Naive thymus-derived CD4-positive, alpha-beta T cell (primary cell): ENCODE measurements at regions of chrX and their contacts with region 1.

Region 1: DNA sequence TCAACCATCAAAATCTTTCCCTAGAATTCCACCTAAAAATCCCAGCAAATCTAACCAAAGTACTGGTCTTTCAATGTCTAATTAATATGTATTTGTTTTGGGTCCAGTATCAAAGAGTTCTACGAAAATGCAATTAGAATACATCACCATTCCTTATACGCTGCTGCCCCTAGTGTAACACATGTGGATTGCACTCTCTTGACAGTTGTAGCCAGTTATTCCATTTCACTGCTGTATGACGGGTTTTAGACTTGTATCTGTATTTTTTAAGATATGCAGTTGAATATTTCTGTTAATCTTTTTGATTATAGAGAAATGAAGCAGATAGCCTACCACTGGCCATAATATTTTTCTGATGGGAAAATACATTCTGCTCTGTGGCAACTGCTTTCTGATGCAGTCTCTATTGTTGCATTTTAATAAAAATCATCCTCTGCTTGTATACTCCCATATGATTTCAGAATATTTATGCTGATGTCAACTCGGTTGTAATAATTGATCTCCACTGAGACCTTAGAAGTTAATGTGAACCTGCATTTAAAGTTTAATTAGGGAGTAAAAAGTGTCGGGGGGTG is 17.1 kb upstream of the PAGE2B start:
- DNase-seq: peak in 6 of 9 donors; percentile 11 to 46 (median 32)
- ATAC-seq: peak; percentile 84
- H3K4me3 ChIP-seq: peak overlapping the region; percentile 35
- H3K4me3 Mint-ChIP-seq: peak overlapping the region; percentile 12 to 87 (median 76)
- H3K27ac ChIP-seq: no peak overlapping the region
- H3K27ac Mint-ChIP-seq: peak overlapping the region in 7 of 9 donors; percentile 43 to 95 (median 90)
- H3K4me1 ChIP-seq: peaks cover 8 to 16% of the 10 kb centered on the region in 2 donors
- H3K4me1 Mint-ChIP-seq: peaks cover 8 to 29% (median 21%) of the 10 kb centered on the region in 7 donors
- H3K27me3 ChIP-seq: no peaks in the 10 kb centered on the region
- H3K27me3 Mint-ChIP-seq: peaks cover 0 to 5% (median 0%) of the 10 kb centered on the region in 5 donors

Region 2: GRCh38 chrX:54423161-54423888 is 634.4 kb before region 1 on chrX:
- CTCF ChIA-PET with region 1: no interaction called
- POLR2A ChIA-PET with region 1: no interaction called
- intact Hi-C with region 1: loop called in 1 of 2 experiments (anchors 1 kb)
- DNase-seq: no peak
- ATAC-seq: no peak
- H3K4me3 ChIP-seq: no peak overlapping the region
- H3K4me3 Mint-ChIP-seq: no peak overlapping the region
- H3K27ac ChIP-seq: no peak overlapping the region
- H3K27ac Mint-ChIP-seq: no peak overlapping the region
- H3K4me1 ChIP-seq: no peaks in the 10 kb centered on the region
- H3K4me1 Mint-ChIP-seq: no peaks in the 10 kb centered on the region
- H3K27me3 ChIP-seq: no peaks in the 10 kb centered on the region
- H3K27me3 Mint-ChIP-seq: peaks cover 0 to 13% (median 2%) of the 10 kb centered on the region in 5 donors

Region 3: DNA sequence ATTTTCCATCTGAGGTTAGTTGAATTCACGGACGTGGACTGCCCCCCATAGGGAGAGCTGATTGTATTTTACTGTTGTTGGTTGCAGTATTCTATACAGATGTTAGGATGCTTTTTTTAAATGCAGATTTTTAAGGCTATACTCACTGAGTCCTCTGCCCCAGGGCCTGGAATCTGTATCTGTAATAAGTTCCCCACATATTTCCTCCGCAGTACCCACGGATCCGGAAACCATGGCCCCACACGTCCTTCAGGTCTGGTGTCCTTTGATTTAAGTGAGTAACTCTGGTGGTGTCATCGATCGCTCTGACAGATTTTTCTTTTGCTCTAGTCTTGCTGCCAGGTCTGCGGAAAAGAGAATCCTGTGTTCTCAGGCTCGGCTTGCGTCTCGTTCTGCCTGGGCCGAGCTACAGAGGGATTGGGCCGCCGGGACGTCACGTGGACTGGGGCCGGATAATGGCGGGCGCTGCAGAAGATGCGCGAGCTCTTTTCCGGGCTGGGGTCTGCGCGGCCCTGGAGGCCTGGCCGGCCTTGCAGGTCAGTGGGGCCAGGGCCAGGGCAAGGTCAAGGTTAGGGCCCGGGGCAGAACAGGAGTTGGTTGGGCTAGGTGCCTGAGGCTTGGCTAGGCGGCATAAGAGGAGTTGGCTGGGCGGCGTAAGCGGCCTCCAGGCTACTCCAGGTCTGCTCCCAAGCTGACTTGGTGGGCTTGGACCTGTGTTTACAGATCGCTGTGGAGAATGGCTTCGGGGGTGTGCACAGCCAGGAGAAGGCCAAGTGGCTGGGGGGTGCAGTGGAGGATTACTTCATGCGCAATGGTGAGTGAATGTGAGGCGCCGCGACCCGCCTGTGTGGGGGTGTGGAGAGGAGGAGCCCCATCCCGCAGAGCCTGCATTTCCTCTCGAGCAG is 617.5 kb before region 1 on chrX and contains the start of gene TSR2:
- CTCF ChIA-PET with region 1: no interaction called
- POLR2A ChIA-PET with region 1: no interaction called
- intact Hi-C with region 1: loop called in 1 of 2 experiments (anchors 5 kb)
- DNase-seq: peak; percentile 50 to 80 (median 74)
- ATAC-seq: peak; percentile 99
- H3K4me3 ChIP-seq: peak within 1 kb of the TSS; percentile 94
- H3K4me3 Mint-ChIP-seq: peak within 1 kb of the TSS; percentile 84 to 100 (median 92)
- H3K27ac ChIP-seq: peak within 1 kb of the TSS; percentile 81
- H3K27ac Mint-ChIP-seq: peak within 1 kb of the TSS; percentile 73 to 94 (median 86)
- H3K4me1 ChIP-seq: peaks cover 8 to 12% of the 10 kb centered on the region in 2 donors
- H3K4me1 Mint-ChIP-seq: peaks cover 15 to 39% (median 26%) of the 10 kb centered on the region in 7 donors
- H3K27me3 ChIP-seq: no peaks in the 10 kb centered on the region
- H3K27me3 Mint-ChIP-seq: no peaks in the 10 kb centered on the region
- total RNA-seq, gene TSR2: 33.6 to 43.3 (median 40.5) TPM

Region 4: DNA sequence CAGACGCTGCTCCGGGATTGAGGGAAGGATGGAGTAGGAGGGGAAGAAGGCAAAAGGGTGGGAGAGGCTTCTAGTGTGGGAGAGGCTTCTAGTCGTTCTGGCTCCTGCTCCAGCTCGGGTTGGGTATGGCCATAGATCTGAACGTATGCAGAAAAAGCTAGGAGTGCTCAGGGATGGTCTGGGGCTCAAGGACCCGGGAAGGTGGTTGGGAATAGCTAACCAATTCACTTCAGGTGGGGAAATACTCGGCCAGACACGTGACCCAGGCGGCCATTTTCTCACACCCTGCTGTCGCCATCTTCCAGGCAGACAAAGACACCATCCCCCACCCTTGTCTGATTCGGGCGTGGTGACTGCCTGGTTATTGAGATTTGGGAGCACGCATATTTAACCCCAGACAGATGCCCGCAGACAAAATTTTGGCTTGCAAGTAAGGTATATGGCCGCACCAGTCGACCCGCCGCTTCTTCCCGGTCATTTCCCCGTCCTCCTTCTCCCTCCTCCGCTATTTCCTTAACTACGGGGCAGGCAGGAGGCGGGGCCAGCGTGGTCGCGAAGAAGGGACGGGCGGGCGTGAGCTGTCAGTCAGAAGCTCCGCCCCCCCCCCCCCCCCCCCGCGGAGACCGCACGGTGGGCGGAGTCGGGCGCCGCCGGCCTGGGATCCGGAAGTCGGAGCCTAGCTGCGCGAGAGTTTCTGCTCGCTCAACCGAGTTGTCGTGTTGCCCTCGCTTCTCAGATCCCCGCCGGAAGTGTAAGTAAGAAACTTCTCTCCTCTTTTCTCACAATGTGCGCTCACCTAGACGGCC is 528.0 kb before region 1 on chrX and contains the start of gene GNL3L:
- CTCF ChIA-PET with region 1: no interaction called
- POLR2A ChIA-PET with region 1: no interaction called
- intact Hi-C with region 1: loop called in 1 of 2 experiments (anchors 5 kb)
- DNase-seq: peak; percentile 58 to 84 (median 76)
- ATAC-seq: peak; percentile 93
- H3K4me3 ChIP-seq: peak within 1 kb of the TSS; percentile 82
- H3K4me3 Mint-ChIP-seq: peak within 1 kb of the TSS; percentile 87 to 97 (median 94)
- H3K27ac ChIP-seq: peak within 1 kb of the TSS; percentile 82
- H3K27ac Mint-ChIP-seq: peak within 1 kb of the TSS; percentile 87 to 99 (median 93)
- H3K4me1 ChIP-seq: peaks cover 17 to 30% of the 10 kb centered on the region in 2 donors
- H3K4me1 Mint-ChIP-seq: peaks cover 10 to 46% (median 32%) of the 10 kb centered on the region in 7 donors
- H3K27me3 ChIP-seq: no peaks in the 10 kb centered on the region
- H3K27me3 Mint-ChIP-seq: no peaks in the 10 kb centered on the region
- total RNA-seq, gene GNL3L: 32.8 to 55.4 (median 41.8) TPM

Region 5: GRCh38 chrX:54808605-54809483 is 248.9 kb before region 1 on chrX:
- CTCF ChIA-PET with region 1: no interaction called
- POLR2A ChIA-PET with region 1: no interaction called
- intact Hi-C with region 1: loop called in 1 of 2 experiments (anchors 5 kb)
- DNase-seq: peak; percentile 63 to 90 (median 84)
- ATAC-seq: peak; percentile 84
- H3K4me3 ChIP-seq: peak overlapping the region; percentile 93
- H3K4me3 Mint-ChIP-seq: peak overlapping the region; percentile 90 to 99 (median 96)
- H3K27ac ChIP-seq: peak overlapping the region; percentile 89
- H3K27ac Mint-ChIP-seq: peak overlapping the region; percentile 93 to 98 (median 96)
- H3K4me1 ChIP-seq: no peaks in the 10 kb centered on the region
- H3K4me1 Mint-ChIP-seq: peaks cover 5 to 28% (median 19%) of the 10 kb centered on the region in 7 donors
- H3K27me3 ChIP-seq: no peaks in the 10 kb centered on the region
- H3K27me3 Mint-ChIP-seq: peaks cover 0 to 25% (median 0%) of the 10 kb centered on the region in 5 donors

Region 6: GRCh38 chrX:54825716-54826438 is 231.9 kb before region 1 on chrX:
- CTCF ChIA-PET with region 1: no interaction called
- POLR2A ChIA-PET with region 1: no interaction called
- intact Hi-C with region 1: loop called in 1 of 2 experiments (anchors 1 kb)
- DNase-seq: peak in 5 of 9 donors; percentile 21 to 42 (median 27)
- ATAC-seq: peak; percentile 51
- H3K4me3 ChIP-seq: no peak overlapping the region
- H3K4me3 Mint-ChIP-seq: no peak overlapping the region
- H3K27ac ChIP-seq: no peak overlapping the region
- H3K27ac Mint-ChIP-seq: peak overlapping the region in 3 of 9 donors; percentile 1 to 31 (median 30)
- H3K4me1 ChIP-seq: no peaks in the 10 kb centered on the region
- H3K4me1 Mint-ChIP-seq: peaks cover 0 to 4% (median 0%) of the 10 kb centered on the region in 7 donors
- H3K27me3 ChIP-seq: no peaks in the 10 kb centered on the region
- H3K27me3 Mint-ChIP-seq: no peaks in the 10 kb centered on the region

Region 7: GRCh38 chrX:54891573-54891972 is 166.2 kb before region 1 on chrX:
- CTCF ChIA-PET with region 1: interaction called, 26 read pairs
- POLR2A ChIA-PET with region 1: interaction called, 4 read pairs
- intact Hi-C with region 1: loop called (anchors 1 kb)
- DNase-seq: peak in 7 of 9 donors; percentile 11 to 54 (median 40)
- ATAC-seq: peak; percentile 60
- H3K4me3 ChIP-seq: no peak overlapping the region
- H3K4me3 Mint-ChIP-seq: no peak overlapping the region
- H3K27ac ChIP-seq: no peak overlapping the region
- H3K27ac Mint-ChIP-seq: no peak overlapping the region
- H3K4me1 ChIP-seq: no peaks in the 10 kb centered on the region
- H3K4me1 Mint-ChIP-seq: peaks cover 0 to 1% (median 0%) of the 10 kb centered on the region in 7 donors
- H3K27me3 ChIP-seq: no peaks in the 10 kb centered on the region
- H3K27me3 Mint-ChIP-seq: peaks cover 0 to 9% (median 4%) of the 10 kb centered on the region in 5 donors